ENCODE measurements at regions of chr17 and their contacts with region 1.

Region 1: DNA sequence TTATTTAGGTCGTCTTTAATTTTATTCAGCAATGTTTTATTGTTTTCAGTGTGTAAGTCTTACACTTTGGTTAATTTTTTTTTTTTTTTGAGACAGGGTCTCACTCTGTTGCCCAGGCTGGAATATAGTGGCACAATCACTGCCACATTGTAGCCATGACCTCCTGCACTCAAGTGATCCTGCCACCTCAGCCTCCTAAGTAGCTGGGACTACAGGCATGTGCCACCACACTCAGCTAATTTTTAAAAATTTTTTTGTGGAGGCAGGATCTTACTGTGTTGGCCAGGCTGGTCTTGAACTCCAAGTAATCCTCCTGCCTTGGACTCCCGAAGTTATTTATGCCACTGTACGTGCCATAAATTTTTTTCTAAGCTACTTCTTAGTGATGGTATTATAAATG is 14.5 kb downstream of the RPS6KB1 start:
- DNase-seq: no peak
- H3K4me3 ChIP-seq: no peak overlapping the region
- H3K27ac ChIP-seq: no peak overlapping the region
- H3K4me1 ChIP-seq: no peaks in the 10 kb centered on the region
- H3K27me3 ChIP-seq: no peaks in the 10 kb centered on the region
- CTCF ChIP-seq: no peak

Region 2: GRCh38 chr17:61722398-61722797 is 1814.9 kb after region 1 on chr17:
- CTCF ChIA-PET with region 1: interaction called, 16 read pairs
- POLR2A ChIA-PET with region 1: no interaction called
- intact Hi-C with region 1: no loop called
- DNase-seq: no peak
- H3K4me3 ChIP-seq: no peak overlapping the region
- H3K27ac ChIP-seq: no peak overlapping the region
- H3K4me1 ChIP-seq: no peaks in the 10 kb centered on the region
- H3K27me3 ChIP-seq: no peaks in the 10 kb centered on the region
- CTCF ChIP-seq: no peak

Measured in A673 (cell line).